PC-3 (cell line): ENCODE measurements at regions of chr1 and their contacts with region 1.

Region 1: GRCh38 chr1:145740266-145740665 is 21.0 kb downstream of the CD160 start:
- DNase-seq: peak; percentile 93
- ATAC-seq: peak; percentile 84
- H3K4me3 ChIP-seq: no peak overlapping the region
- H3K27ac ChIP-seq: peak overlapping the region; percentile 86
- H3K4me1 ChIP-seq: peaks cover 36% of the 10 kb centered on the region
- H3K27me3 ChIP-seq: no peaks in the 10 kb centered on the region
- CTCF ChIP-seq: no peak

Region 2: DNA sequence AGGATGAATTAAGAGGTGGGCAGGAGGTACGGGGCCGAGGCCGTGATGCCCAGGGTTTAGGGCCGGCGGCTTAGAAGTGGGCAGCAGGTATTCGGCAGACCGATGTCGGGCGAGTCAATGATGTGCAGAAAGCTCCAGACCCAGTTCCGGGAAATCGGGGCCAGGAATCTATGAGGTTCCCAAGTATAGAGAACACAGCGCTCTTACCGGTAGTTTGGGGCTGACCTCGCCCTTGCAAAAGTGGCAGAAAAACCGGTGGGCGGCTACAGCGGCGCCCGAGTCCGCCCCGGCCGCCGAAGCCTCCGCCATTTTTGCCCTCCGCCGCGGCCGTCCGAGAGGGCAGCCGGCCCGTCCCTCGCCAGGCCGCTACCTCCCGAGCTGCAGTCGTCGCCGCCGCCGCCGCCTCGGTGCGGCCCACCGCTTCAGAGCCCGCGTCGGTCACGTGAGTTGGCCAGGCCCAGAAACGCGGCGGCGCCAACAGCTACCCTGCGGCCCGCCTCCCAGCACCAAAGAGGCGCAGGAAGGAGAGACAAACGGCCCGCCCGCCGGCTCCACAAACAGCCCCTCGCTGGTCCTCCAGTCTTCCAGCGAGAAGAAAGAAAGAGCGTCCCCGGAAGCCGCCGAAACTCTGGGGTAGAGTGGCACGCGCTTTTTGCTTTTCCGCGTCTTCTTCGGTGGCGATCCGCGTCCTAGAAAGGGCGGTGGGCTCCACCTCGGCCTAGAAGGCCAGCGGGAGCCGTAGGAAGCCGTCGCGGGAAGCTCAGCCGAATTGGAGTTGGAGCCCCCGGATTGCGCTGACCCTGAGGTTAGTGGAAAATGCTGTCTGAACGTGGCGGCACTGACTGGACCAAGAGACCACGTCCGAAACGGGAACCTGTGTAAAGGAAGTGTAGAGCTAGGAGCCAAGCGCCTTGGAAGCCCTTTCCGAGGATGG is 83.6 kb after region 1 on chr1 and contains the starts of genes POLR3C and RNF115:
- CTCF ChIA-PET with region 1: no interaction called
- POLR2A ChIA-PET with region 1: no interaction called
- intact Hi-C with region 1: loop called (anchors 5 kb)
- DNase-seq: peak; percentile 88
- ATAC-seq: peak; percentile 85
- H3K4me3 ChIP-seq: peak within 1 kb of the TSS; percentile 82
- H3K27ac ChIP-seq: peak within 1 kb of the TSS; percentile 68
- H3K4me1 ChIP-seq: peaks cover 18% of the 10 kb centered on the region
- H3K27me3 ChIP-seq: no peaks in the 10 kb centered on the region
- CTCF ChIP-seq: no peak
- total RNA-seq, gene POLR3C: 35.8 and 41.5 TPM in 2 replicates
- total RNA-seq, gene RNF115: 15.2 and 15.9 TPM in 2 replicates